ENCODE measurements at regions of chr2 and their contacts with region 1.

Region 1: GRCh38 chr2:9753276-9753600 is 90.0 kb upstream of the TAF1B start:
- DNase-seq: peak; percentile 84
- ATAC-seq: peak; percentile 84
- H3K4me3 Mint-ChIP-seq: peak overlapping the region; percentile 66
- H3K27ac Mint-ChIP-seq: peak overlapping the region; percentile 96
- H3K4me1 Mint-ChIP-seq: peaks cover 61% of the 10 kb centered on the region
- H3K27me3 Mint-ChIP-seq: peaks cover 18% of the 10 kb centered on the region

Region 2: GRCh38 chr2:9205963-9206948 is 547.0 kb before region 1 on chr2 and contains the start of gene ASAP2:
- CTCF ChIA-PET with region 1: no interaction called
- POLR2A ChIA-PET with region 1: no interaction called
- intact Hi-C with region 1: loop called in 1 of 2 experiments (anchors 10 kb)
- DNase-seq: peak; percentile 70
- ATAC-seq: peak; percentile 74
- H3K4me3 Mint-ChIP-seq: peak within 1 kb of the TSS; percentile 62
- H3K27ac Mint-ChIP-seq: no peak within 1 kb of the TSS
- H3K4me1 Mint-ChIP-seq: peaks cover 11% of the 10 kb centered on the region
- H3K27me3 Mint-ChIP-seq: peaks cover 43% of the 10 kb centered on the region
- total RNA-seq, gene ASAP2: 0.21 to 0.26 TPM

Region 3: DNA sequence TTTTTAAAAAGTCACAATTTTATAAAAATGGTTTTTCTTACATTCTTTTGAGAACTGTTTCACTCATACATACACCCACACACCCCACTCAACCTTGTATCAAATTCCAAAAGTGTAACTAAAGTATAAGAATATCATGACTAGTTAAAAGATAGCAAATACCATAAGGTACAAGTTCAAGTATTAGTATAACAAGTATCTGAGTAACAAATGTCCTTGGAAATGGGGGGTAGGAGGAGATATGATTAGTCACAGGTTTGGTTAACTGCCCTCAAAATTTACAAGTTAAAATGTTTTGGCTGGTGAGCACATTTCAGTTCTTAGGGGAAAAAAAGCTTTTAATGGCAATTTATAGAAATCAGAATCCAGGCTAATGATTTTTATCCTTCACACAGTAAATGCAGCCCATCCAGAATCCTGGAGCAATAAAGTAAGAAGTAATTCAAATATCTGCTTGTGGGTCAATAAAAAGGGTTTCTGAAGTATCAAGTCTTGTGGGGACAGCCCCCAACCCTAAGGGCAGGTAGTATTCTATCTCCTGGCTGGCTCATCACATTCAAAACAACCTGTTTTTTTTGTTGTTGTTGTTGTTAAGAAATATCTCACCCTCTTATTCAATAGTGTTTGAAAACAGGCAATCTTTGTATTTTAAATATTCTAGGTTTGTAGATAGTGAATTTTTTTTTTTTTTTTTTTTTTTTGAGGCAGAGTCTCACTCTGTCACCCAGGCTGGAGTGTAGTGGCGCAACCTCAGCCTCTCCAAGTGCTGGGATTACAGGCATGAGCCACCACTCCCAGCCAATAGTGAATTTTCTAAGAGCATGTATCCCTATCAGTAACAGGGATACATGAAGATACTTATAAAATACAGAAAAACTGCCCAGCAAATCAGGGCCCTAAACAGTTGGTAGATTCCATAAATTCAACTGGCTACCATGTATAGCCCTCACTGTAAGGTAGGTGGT is 264.4 kb before region 1 on chr2:
- CTCF ChIA-PET with region 1: no interaction called
- POLR2A ChIA-PET with region 1: no interaction called
- intact Hi-C with region 1: no loop called
- DNase-seq: no peak
- ATAC-seq: peak; percentile 66
- H3K4me3 Mint-ChIP-seq: no peak overlapping the region
- H3K27ac Mint-ChIP-seq: peak overlapping the region; percentile 51
- H3K4me1 Mint-ChIP-seq: peaks cover 29% of the 10 kb centered on the region
- H3K27me3 Mint-ChIP-seq: no peaks in the 10 kb centered on the region

Region 4: GRCh38 chr2:9613291-9613690 is 139.9 kb before region 1 on chr2:
- CTCF ChIA-PET with region 1: no interaction called
- POLR2A ChIA-PET with region 1: interaction called, 8 read pairs
- intact Hi-C with region 1: loop called (anchors 1 to 5 kb)
- DNase-seq: no peak
- ATAC-seq: no peak
- H3K4me3 Mint-ChIP-seq: no peak overlapping the region
- H3K27ac Mint-ChIP-seq: peak overlapping the region; percentile 27
- H3K4me1 Mint-ChIP-seq: peaks cover 95% of the 10 kb centered on the region
- H3K27me3 Mint-ChIP-seq: no peaks in the 10 kb centered on the region

Region 5: DNA sequence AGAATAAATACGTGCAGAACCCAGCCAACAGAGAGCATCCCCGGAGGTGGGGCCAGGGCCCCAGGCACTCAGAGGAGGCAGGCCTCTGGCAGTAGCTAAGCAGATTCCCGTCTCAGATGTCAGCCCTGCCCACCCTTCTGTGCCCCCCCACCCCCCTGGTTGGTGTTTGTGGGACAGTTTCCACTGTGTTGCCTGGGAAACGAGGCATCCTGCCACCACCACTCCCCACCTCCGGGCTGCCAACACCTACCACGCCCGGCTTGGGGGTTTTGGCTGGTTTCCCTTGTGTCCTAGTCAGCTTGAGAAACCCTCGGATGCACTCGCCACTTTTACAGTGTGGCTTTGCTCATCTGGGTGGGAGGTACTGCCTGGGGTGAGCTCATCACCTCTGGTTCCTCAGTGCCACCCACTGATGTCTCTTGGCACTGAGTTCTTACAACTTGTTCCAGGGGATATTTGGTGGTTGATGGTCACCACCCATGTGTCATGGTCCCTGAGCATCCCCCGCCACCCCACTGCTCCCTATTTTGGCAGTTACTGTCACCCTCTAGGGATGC is 50.1 kb before region 1 on chr2:
- CTCF ChIA-PET with region 1: interaction called, 3 read pairs
- POLR2A ChIA-PET with region 1: interaction called, 9 read pairs
- intact Hi-C with region 1: loop called (anchors 1 to 2 kb)
- DNase-seq: peak; percentile 91
- ATAC-seq: peak; percentile 96
- H3K4me3 Mint-ChIP-seq: no peak overlapping the region
- H3K27ac Mint-ChIP-seq: peak overlapping the region; percentile 37
- H3K4me1 Mint-ChIP-seq: peaks cover 42% of the 10 kb centered on the region
- H3K27me3 Mint-ChIP-seq: no peaks in the 10 kb centered on the region

Region 6: GRCh38 chr2:9739531-9739964 is 13.7 kb before region 1 on chr2:
- CTCF ChIA-PET with region 1: interaction called, 5 read pairs
- POLR2A ChIA-PET with region 1: interaction called, 4 read pairs
- intact Hi-C with region 1: loop called (anchors 1 kb)
- DNase-seq: peak; percentile 73
- ATAC-seq: peak; percentile 75
- H3K4me3 Mint-ChIP-seq: peak overlapping the region; percentile 65
- H3K27ac Mint-ChIP-seq: peak overlapping the region; percentile 92
- H3K4me1 Mint-ChIP-seq: peaks cover 53% of the 10 kb centered on the region
- H3K27me3 Mint-ChIP-seq: no peaks in the 10 kb centered on the region

Region 7: DNA sequence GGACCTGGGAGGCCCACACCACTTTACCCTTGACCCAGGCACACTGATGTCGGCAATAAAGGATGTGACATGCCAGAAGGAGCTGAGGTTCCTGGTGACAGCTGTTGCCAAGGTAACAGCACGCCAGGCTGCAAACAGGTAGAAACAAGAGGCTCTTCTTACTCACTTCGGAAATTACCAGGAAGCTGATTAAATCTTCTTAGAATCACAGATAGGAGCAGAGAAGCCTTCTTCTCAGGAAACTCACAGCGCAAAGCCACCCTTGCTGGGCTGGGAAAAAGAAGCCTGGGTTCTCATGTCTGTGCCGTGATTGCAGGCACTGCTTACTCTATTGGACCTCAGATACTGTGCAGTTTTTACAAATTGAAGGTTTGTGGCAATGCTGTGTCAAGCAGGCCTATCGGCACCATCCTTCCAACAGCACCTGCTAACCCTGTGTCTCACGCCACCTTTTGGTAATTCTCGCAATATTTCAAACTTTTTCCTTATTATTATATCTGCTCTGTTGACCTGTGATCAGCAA is 29.0 kb after region 1 on chr2:
- CTCF ChIA-PET with region 1: interaction called, 3 read pairs
- POLR2A ChIA-PET with region 1: no interaction called
- intact Hi-C with region 1: loop called (anchors 1 kb)
- DNase-seq: peak; percentile 89
- ATAC-seq: peak; percentile 80
- H3K4me3 Mint-ChIP-seq: peak overlapping the region; percentile 53
- H3K27ac Mint-ChIP-seq: peak overlapping the region; percentile 93
- H3K4me1 Mint-ChIP-seq: peaks cover 57% of the 10 kb centered on the region
- H3K27me3 Mint-ChIP-seq: no peaks in the 10 kb centered on the region

Measured in activated CD4-positive, alpha-beta T cell treated with anti-CD3 and anti-CD28 coated beads for 36 hours (primary cell).